ENCODE measurements at regions of chr12 and their contacts with region 1.

Region 1: DNA sequence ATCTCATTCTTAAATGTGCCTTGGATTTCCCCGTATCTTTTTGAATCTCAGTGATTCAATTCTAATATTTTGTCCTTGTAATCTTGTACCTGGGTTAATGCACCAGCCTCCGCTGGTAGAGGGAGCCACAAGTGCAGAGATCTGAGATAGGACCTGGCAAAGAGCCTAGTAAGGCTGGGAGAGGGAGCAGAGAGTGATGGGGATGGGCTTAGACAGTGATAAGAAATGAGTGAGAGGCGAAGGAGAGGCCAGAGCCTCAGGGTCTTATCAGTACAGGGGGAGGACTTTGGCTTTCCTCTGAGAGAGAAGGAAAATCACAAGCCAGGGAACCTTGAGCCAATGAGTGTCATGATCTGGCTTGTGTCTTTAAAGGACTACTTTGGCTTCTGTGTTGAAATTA is 30.5 kb upstream of the LMNTD1 start:
- DNase-seq: peak; percentile 24
- ATAC-seq: peak; percentile 39
- H3K4me3 Mint-ChIP-seq: no peak overlapping the region
- H3K27ac Mint-ChIP-seq: no peak overlapping the region
- H3K4me1 Mint-ChIP-seq: peaks cover 4% of the 10 kb centered on the region
- H3K27me3 Mint-ChIP-seq: no peaks in the 10 kb centered on the region

Region 2: GRCh38 chr12:25769076-25769945 is 185.8 kb after region 1 on chr12:
- CTCF ChIA-PET with region 1: no interaction called
- POLR2A ChIA-PET with region 1: no interaction called
- intact Hi-C with region 1: no loop called
- DNase-seq: no peak
- ATAC-seq: no peak
- H3K4me3 Mint-ChIP-seq: no peak overlapping the region
- H3K27ac Mint-ChIP-seq: no peak overlapping the region
- H3K4me1 Mint-ChIP-seq: no peaks in the 10 kb centered on the region
- H3K27me3 Mint-ChIP-seq: no peaks in the 10 kb centered on the region

Region 3: DNA sequence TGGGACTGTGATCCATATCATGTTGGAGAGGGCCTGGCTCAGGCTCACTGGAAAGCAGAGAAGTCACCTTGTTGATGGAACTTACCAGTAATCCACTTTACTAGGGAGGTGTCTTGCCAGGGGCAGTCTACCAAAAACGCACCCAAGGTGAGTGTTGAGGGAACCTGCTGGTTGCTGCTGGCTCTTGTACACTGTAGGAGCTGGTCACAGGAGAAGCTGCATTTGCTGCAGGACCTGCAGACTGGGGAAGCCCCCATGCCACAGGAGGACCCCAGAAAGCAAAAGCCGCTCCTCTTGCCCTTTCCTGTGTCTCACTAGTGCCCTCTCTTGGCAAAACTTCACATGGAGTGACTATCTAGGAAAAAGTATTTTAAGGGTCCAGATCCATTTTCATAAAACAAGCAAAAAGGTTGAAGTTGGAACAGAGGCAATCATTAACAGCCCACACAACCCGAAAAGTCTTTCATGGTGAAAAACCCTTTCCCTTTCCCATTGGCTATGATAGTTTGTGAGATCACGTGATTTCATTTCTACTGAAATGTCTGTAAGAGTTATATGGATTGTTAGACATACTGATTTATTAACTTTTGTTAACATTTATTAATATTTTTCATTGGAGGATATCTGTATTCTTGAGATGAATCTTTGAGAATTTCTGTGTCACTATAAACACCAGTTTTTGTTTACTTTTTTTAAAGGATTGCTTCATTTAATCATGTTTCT is 434.1 kb after region 1 on chr12:
- CTCF ChIA-PET with region 1: no interaction called
- POLR2A ChIA-PET with region 1: no interaction called
- intact Hi-C with region 1: loop called in 1 of 2 experiments (anchors 5 kb)
- DNase-seq: peak; percentile 23
- ATAC-seq: no peak
- H3K4me3 Mint-ChIP-seq: no peak overlapping the region
- H3K27ac Mint-ChIP-seq: no peak overlapping the region
- H3K4me1 Mint-ChIP-seq: no peaks in the 10 kb centered on the region
- H3K27me3 Mint-ChIP-seq: no peaks in the 10 kb centered on the region

Measured in activated CD4-positive, alpha-beta T cell treated with anti-CD3 and anti-CD28 coated beads for 36 hours (primary cell).